ENCODE measurements at regions of chr20 and their contacts with region 1.

Region 1: GRCh38 chr20:36135159-36135558 is 19.4 kb upstream of the EPB41L1 start:
- DNase-seq: no peak
- ATAC-seq: no peak

Region 2: GRCh38 chr20:35994994-35995453 is 140.1 kb before region 1 on chr20:
- intact Hi-C with region 1: loop called (anchors 5 kb)
- DNase-seq: peak; percentile 91
- ATAC-seq: peak; percentile 95

Region 3: DNA sequence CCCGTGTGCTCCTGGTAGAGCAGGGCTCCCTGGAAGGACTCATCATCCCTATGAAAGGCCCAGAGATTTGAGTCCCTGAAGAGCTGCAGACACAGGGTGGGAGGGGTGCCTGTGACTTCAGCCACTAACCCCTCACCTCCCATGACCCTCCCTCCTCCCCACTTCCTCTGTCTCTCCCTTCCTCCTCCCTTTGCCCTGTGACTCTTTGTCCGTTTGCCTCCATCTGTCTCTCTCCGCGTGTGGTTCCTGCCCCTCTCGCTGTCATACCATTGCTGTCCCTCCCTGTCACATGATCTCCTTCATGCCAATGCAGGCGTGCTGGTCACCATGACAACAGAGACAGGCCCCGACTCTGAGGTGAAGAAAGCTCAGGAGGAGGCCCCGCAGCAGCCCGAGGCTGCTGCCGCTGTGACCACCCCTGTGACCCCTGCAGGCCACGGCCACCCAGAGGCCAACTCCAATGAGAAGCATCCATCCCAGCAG is 38.3 kb after region 1 on chr20:
- intact Hi-C with region 1: no loop called
- DNase-seq: no peak
- ATAC-seq: peak; percentile 57

Measured in sciatic nerve (tissue), 2 donors.